Mammary epithelial cell (primary cell): ENCODE measurements at regions of chr3 and their contacts with region 1.

Region 1: GRCh38 chr3:194134757-194135528 is 1.0 kb upstream of the HES1 start:
- DNase-seq: peak; percentile 99
- H3K4me3 ChIP-seq: peak overlapping the region; percentile 32 to 44 (median 42)
- H3K27ac ChIP-seq: peak overlapping the region; percentile 88
- H3K4me1 ChIP-seq: peaks cover 60% of the 10 kb centered on the region
- H3K27me3 ChIP-seq: no peaks in the 10 kb centered on the region
- CTCF ChIP-seq: no peak

Region 2: DNA sequence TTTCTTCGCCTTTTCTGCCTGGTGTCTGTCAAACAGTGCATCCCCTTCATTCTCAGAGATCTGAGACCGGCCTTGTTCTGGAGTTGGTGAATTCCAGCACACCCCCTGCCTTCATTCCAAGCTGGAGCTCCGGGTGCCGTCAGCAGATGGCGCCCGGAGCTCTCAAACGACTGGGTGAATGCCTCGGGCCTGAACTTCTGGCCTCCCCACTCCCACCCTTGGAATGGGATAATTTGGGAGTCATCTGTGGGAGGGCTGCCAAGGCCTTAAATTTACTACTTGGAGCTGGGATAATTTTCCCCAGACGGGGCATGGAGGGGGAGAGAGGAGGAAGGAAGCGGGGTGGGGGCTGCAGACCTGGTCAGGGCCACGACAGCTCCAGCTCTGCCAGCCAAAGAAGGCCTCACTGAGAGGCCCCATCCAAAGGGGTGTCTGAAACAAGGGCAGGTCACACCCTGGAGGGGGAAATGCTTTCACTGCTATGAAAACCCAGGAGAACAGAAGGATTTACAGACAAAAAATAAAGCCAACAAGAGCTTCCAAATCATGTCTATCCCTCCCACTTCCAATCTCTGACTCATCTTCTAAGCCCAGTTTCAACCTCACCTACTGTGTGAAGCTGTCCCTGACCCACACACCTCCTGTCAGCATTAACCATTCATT is 354.0 kb before region 1 on chr3:
- CTCF ChIA-PET with region 1: interaction called, 36 read pairs
- dilution Hi-C with region 1: no loop called
- in situ Hi-C with region 1: loop called (anchors 10 kb)
- intact Hi-C with region 1: loop called (anchors 1 kb)
- DNase-seq: peak; percentile 94
- H3K4me3 ChIP-seq: no peak overlapping the region
- H3K27ac ChIP-seq: peak overlapping the region; percentile 95
- H3K4me1 ChIP-seq: peaks cover 42% of the 10 kb centered on the region
- H3K27me3 ChIP-seq: no peaks in the 10 kb centered on the region
- CTCF ChIP-seq: peak; percentile 62 to 94

Region 3: DNA sequence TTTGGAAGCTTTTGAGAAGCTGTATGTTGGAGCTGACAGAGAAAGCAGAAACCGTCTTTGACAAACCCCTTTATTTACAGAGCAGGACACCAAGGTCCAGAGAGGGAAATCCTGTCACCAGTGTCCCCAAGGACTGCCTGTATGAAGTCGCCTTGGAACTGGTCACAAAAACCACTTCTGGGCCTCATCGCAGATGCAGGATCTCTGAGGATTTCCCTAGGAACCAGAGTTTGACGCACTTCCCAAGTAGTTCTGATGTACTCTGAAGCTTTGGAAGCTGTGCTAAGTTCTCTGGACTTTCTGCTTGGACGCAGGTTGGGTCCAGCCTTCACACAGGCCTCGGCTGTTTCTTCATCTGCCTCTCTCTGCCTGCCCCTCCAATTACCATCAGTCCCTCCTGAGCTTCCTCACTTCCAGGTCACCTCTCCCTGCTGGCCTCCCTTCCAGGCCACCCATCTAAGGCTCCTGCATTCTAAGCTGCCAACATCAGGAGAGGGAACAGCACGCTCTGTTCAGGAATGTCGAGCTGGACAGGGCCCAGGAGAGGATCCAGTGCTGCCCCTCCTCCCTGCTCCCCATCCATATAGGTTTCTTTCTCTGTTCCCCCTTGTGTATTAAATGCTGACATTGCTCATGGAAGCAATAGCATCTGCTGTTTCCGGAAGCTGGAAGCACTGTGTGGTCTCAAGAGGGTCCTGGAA is 271.1 kb before region 1 on chr3:
- CTCF ChIA-PET with region 1: no interaction called
- dilution Hi-C with region 1: loop called (anchors 5 kb)
- in situ Hi-C with region 1: no loop called
- intact Hi-C with region 1: no loop called
- DNase-seq: no peak
- H3K4me3 ChIP-seq: no peak overlapping the region
- H3K27ac ChIP-seq: no peak overlapping the region
- H3K4me1 ChIP-seq: peaks cover 39% of the 10 kb centered on the region
- H3K27me3 ChIP-seq: no peaks in the 10 kb centered on the region
- CTCF ChIP-seq: no peak

Region 4: DNA sequence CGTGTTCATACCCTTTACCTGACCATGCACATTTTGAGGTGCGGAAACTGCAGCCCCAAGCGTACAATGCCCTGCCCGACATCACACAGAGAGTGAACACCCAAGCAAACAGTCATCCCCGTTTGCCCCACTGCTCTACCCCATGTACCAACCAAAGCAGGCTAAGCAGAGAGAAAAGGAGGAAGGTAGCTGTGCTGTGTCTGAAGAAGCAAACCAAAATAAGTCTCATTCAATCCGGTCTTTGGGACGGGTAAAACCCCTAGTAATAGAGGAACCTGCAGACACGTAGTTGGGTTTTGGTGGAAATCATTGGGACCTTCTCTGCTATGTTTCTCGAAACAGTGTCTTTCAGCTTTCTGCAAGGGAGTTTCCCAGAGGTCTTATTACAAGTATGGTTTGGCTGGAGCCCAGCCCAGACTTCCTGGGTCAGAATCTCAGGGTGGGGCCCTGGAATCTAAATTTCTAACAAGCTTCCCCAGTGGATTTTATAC is 163.6 kb before region 1 on chr3:
- CTCF ChIA-PET with region 1: no interaction called
- dilution Hi-C with region 1: no loop called
- in situ Hi-C with region 1: no loop called
- intact Hi-C with region 1: loop called (anchors 5 kb)
- DNase-seq: peak; percentile 76
- H3K4me3 ChIP-seq: no peak overlapping the region
- H3K27ac ChIP-seq: no peak overlapping the region
- H3K4me1 ChIP-seq: peaks cover 26% of the 10 kb centered on the region
- H3K27me3 ChIP-seq: no peaks in the 10 kb centered on the region
- CTCF ChIP-seq: no peak

Region 5: DNA sequence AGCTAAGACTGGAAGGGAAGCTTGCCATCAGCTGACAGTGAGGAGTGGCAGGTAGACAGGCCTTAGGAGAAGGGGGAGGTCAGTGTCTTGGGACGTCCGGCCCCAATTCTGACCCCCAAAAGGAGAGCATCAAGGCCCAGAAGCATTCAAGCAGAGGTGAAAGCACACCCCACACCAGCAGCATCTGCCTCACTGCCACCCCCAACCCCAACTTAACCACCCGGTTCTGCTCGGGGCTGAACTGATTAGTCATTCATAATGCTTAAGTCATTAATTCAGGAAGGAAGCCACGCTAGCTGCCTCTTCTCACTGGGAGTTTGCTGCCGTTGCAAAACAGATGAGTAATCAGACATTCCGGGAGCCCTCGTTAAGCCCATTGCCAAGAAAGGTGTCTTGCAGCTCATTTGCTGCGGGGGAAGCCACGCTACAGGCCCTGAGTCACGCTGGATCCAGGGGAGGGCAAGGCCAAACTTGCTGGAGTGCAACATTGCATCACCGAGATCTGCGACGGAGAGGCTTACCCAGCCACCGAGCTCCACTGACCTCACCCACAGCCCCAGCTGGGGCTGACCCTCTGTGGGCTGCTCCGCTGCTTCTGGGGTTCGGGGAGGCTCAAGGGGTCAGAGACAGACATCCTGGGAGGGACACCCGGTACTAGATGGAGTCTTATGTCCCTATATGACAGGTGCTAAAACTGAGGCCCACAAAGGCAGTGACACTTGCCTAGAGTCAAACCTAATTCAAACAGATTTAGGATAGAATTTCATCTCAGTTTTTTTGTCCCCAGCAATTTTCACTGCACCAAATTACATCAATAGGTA is 45.4 kb before region 1 on chr3:
- CTCF ChIA-PET with region 1: no interaction called
- dilution Hi-C with region 1: no loop called
- in situ Hi-C with region 1: no loop called
- intact Hi-C with region 1: loop called (anchors 1 kb)
- DNase-seq: peak; percentile 100
- H3K4me3 ChIP-seq: no peak overlapping the region
- H3K27ac ChIP-seq: peak overlapping the region; percentile 77
- H3K4me1 ChIP-seq: peaks cover 34% of the 10 kb centered on the region
- H3K27me3 ChIP-seq: no peaks in the 10 kb centered on the region
- CTCF ChIP-seq: no peak

Region 6: GRCh38 chr3:194404365-194405140 is 269.6 kb after region 1 on chr3:
- CTCF ChIA-PET with region 1: interaction called, 3 read pairs
- dilution Hi-C with region 1: no loop called
- in situ Hi-C with region 1: no loop called
- intact Hi-C with region 1: loop called (anchors 5 kb)
- DNase-seq: peak; percentile 29
- H3K4me3 ChIP-seq: no peak overlapping the region
- H3K27ac ChIP-seq: no peak overlapping the region
- H3K4me1 ChIP-seq: no peaks in the 10 kb centered on the region
- H3K27me3 ChIP-seq: no peaks in the 10 kb centered on the region
- CTCF ChIP-seq: peak; percentile 64 to 69